ENCODE measurements at regions of chr2 and their contacts with region 1.

Region 1: DNA sequence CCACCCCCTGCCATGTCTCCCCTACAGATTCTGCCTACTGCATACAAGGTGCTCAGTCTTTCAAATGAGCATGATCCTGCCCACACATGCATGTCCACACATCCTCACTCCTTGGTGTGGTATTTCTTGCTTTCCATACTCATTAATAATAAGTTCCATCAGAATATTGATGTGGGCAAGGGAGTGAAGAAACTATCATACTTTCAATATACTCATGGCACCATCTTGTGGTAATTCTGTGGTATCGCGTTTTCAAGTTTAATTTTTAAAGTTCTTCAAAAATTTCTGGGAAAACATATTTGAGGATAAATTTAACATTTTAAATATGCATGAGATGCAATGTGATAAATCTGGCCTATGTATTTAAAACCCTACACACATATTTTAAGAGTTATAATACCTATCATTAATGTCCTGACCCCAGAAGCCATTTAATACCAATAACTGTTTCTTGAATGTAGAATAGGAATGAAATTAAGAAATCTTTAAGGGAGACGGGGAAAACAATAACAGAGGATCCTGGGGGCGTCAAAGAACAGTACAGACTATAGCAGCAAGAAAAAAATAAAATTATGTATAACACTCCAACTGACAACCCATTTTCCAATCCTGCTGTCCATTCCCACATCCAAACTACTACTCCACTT is 110.1 kb downstream of the ZNF385B start:
- DNase-seq: no peak
- ATAC-seq: no peak
- H3K4me3 Mint-ChIP-seq: no peak overlapping the region
- H3K27ac Mint-ChIP-seq: no peak overlapping the region
- H3K4me1 Mint-ChIP-seq: no peaks in the 10 kb centered on the region
- H3K27me3 Mint-ChIP-seq: no peaks in the 10 kb centered on the region
- CTCF ChIP-seq: peak; percentile 71

Region 2: GRCh38 chr2:179422037-179422643 is 329.1 kb before region 1 on chr2:
- CTCF ChIA-PET with region 1: no interaction called
- POLR2A ChIA-PET with region 1: no interaction called
- intact Hi-C with region 1: loop called (anchors 2 kb)
- DNase-seq: peak; percentile 74
- ATAC-seq: no peak
- H3K4me3 Mint-ChIP-seq: no peak overlapping the region
- H3K27ac Mint-ChIP-seq: no peak overlapping the region
- H3K4me1 Mint-ChIP-seq: no peaks in the 10 kb centered on the region
- H3K27me3 Mint-ChIP-seq: peaks cover 11% of the 10 kb centered on the region
- CTCF ChIP-seq: peak; percentile 67

Region 3: GRCh38 chr2:179677077-179677688 is 74.1 kb before region 1 on chr2:
- CTCF ChIA-PET with region 1: no interaction called
- POLR2A ChIA-PET with region 1: no interaction called
- intact Hi-C with region 1: no loop called
- DNase-seq: no peak
- ATAC-seq: no peak
- H3K4me3 Mint-ChIP-seq: no peak overlapping the region
- H3K27ac Mint-ChIP-seq: no peak overlapping the region
- H3K4me1 Mint-ChIP-seq: no peaks in the 10 kb centered on the region
- H3K27me3 Mint-ChIP-seq: no peaks in the 10 kb centered on the region
- CTCF ChIP-seq: no peak